B cell (primary cell): ENCODE measurements at regions of chr22 and their contacts with region 1.

Region 1: DNA sequence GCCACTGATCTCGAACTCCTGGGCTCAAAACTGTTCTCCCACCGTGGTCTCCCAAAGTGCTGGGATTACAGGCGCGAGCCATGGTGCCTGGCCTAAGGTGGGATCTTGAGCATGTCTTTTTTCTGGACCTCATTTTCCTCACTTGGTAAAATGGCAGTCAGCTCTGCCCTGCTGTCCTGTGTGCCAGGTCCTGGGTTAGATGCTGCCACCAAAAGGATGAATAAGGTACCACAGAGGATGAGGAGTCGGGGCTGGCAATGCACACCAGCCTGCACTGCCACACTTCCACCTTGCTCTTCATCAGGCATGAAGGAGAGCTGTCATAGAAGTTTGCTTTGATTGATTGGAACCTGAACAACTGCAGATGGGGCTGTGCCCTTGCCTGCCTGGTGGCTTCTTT is 32.3 kb downstream of the ACO2 start:
- DNase-seq: peak; percentile 71
- ATAC-seq: peak; percentile 88
- H3K4me3 ChIP-seq: no peak overlapping the region
- H3K4me3 Mint-ChIP-seq: peak overlapping the region; percentile 23
- H3K27ac ChIP-seq: peak overlapping the region in 1 of 2 donors; percentile 10
- H3K27ac Mint-ChIP-seq: peak overlapping the region; percentile 86
- H3K4me1 ChIP-seq: peaks cover 0 to 31% of the 10 kb centered on the region in 2 donors
- H3K4me1 Mint-ChIP-seq: peaks cover 35% of the 10 kb centered on the region
- H3K27me3 ChIP-seq: no peaks in the 10 kb centered on the region
- H3K27me3 Mint-ChIP-seq: no peaks in the 10 kb centered on the region
- CTCF ChIP-seq: peak; percentile 61

Region 2: DNA sequence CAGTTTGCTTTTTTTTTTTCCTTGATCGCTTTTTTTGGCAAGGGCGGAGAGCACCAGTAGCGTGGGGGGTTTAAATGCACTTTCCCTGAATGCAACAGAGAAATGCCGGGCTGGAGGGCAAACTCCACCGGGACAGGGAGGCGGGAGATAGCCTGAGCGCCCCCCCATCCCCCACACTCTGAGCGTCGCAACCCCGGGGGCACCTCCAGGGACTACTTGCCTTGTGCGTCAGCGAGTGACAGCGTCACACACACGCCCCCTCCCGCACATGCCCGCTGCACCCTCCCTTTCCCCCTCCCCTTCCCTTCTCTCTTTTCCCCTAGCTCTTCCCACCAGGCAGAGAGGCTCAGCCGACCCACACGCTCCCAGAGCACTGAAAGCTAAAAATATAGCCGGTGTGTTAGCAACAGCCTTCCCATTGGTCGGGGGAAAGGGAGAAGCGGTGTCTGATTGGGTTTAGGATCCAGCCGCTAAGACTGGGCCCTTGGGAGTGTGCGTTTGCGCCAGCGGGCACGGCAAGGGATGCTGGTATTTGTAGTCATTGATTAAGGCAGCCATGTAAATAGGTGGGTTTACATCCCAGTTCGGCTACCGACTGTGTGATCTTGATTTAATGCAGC is 52.9 kb before region 1 on chr22:
- CTCF ChIA-PET with region 1: interaction called, 14 read pairs
- POLR2A ChIA-PET with region 1: interaction called, 5 read pairs
- intact Hi-C with region 1: loop called (anchors 2 kb)
- DNase-seq: peak; percentile 96
- ATAC-seq: peak; percentile 60
- H3K4me3 ChIP-seq: peak overlapping the region; percentile 90 to 99 (median 97)
- H3K4me3 Mint-ChIP-seq: peak overlapping the region; percentile 99
- H3K27ac ChIP-seq: peak overlapping the region; percentile 97 to 98
- H3K27ac Mint-ChIP-seq: peak overlapping the region; percentile 94
- H3K4me1 ChIP-seq: peaks cover 8 to 25% of the 10 kb centered on the region in 2 donors
- H3K4me1 Mint-ChIP-seq: peaks cover 28% of the 10 kb centered on the region
- H3K27me3 ChIP-seq: no peaks in the 10 kb centered on the region
- H3K27me3 Mint-ChIP-seq: no peaks in the 10 kb centered on the region
- CTCF ChIP-seq: no peak

Region 3: DNA sequence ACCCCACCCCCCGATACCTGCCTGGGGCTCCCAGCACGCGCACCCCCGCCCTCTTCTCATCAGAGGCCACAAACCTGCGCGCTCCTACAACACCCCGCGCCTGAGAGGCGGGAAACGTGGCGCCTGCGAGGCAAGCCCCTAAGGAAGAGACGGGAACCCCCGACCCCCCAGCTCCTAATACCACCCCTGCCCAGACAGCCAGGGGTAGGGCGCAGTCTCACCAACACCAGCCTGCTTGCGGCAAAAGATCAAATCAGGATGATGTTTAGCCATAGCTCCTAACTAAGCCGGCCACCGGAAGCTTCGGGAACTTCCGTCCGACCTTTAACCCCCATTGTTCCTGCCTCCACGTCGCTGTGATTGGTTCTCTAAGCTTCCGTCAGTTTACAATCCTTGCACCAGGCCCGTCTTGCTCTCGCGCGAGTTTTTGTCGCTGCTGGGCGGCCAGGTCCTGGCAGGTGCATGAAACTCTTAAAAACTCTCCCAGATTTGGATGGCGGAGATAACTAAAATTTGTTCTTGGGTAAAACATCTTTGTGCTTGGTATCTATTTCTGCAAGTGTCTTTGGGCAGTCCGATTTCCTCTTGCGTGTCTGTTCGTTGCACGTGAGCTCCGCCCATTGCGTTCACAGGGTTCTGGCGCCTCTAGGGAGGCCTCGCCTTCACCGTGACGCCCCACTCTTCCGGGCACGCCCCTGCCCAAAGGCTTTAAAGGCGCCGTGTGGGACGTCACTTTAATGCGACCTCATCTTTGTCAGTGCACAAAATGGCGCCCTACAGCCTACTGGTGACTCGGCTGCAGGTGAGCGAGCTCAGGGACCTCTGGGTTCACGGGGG is 32.6 kb before region 1 on chr22 and contains the starts of genes ACO2 and PHF5A:
- CTCF ChIA-PET with region 1: interaction called, 13 read pairs
- POLR2A ChIA-PET with region 1: interaction called, 3 read pairs
- intact Hi-C with region 1: loop called (anchors 5 kb)
- DNase-seq: peak; percentile 99
- ATAC-seq: peak; percentile 91
- H3K4me3 ChIP-seq: peak within 1 kb of the TSS; percentile 71 to 98 (median 86)
- H3K4me3 Mint-ChIP-seq: peak within 1 kb of the TSS; percentile 89
- H3K27ac ChIP-seq: peak within 1 kb of the TSS; percentile 99
- H3K27ac Mint-ChIP-seq: peak within 1 kb of the TSS; percentile 98
- H3K4me1 ChIP-seq: peaks cover 20 to 31% of the 10 kb centered on the region in 2 donors
- H3K4me1 Mint-ChIP-seq: peaks cover 59% of the 10 kb centered on the region
- H3K27me3 ChIP-seq: no peaks in the 10 kb centered on the region
- H3K27me3 Mint-ChIP-seq: no peaks in the 10 kb centered on the region
- CTCF ChIP-seq: no peak
- total RNA-seq, gene ACO2: 91.7 and 104 TPM in 2 replicates
- total RNA-seq, gene PHF5A: 31.6 and 34.5 TPM in 2 replicates

Region 4: DNA sequence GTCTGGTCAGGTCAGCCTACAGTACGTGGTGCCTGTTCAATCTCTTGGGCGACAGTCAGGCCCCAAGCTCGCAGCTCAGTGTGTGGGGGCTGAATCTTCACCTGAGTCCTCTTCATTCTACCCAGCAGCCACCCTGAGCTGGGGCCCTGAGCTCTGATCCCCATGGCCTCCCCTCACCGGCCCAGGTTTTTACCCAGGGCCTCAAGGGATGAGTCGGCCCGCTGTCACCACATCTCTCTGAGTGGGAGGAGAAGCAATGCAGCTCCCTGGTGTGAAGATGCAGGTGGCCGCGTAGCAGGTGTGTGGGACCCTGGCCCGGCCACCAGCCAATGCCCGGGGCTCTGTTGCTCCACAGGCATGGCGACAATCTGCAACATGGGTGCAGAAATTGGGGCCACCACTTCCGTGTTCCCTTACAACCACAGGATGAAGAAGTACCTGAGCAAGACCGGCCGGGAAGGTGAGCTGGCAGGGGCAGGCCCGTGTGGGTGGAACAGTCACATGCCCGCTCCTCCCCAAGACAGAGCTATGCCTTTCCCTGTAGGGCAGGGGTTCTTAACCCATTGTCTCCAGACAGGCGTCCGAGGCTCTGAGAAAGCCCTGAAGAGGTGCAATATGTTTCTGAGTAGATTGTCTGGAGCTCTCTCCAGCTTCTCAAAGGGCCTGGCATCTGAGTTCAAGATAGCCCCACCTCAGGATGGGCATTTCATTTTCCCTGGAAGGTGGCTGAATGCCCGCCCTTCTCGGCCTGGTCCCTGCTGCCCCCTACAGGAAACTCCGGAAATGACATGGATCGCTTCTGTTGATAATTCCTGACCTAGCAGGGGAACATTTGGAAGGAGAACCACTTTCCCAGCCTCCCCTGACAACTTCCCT is 16.2 kb after region 1 on chr22:
- CTCF ChIA-PET with region 1: interaction called, 13 read pairs
- POLR2A ChIA-PET with region 1: interaction called, 4 read pairs
- intact Hi-C with region 1: no loop called
- DNase-seq: peak; percentile 60
- ATAC-seq: no peak
- H3K4me3 ChIP-seq: no peak overlapping the region
- H3K4me3 Mint-ChIP-seq: no peak overlapping the region
- H3K27ac ChIP-seq: no peak overlapping the region
- H3K27ac Mint-ChIP-seq: peak overlapping the region; percentile 37
- H3K4me1 ChIP-seq: no peaks in the 10 kb centered on the region
- H3K4me1 Mint-ChIP-seq: no peaks in the 10 kb centered on the region
- H3K27me3 ChIP-seq: no peaks in the 10 kb centered on the region
- H3K27me3 Mint-ChIP-seq: no peaks in the 10 kb centered on the region
- CTCF ChIP-seq: peak; percentile 71